Ovary (tissue), 10 donors: ENCODE measurements at regions of chr10 and their contacts with region 1.

Region 1: DNA sequence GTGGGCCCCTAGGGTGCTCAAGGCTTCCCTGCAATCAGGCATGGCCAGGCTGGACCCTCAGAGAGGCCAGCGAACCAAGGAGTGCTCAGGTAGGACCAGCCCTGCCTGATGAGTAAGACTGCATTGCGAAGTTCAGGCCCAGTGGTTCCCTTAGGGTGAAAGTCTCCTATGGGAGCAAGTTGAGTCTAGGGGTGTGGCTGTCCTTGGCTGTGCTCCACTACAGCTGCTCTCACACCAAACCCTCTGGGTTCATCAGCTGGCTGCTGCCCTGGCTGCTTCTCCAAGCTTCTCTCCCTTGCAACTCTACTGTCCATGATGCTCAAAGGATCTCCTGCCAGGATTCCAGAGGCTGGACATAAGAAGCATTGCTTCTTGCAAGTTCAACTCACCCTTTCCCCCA is 18.7 kb downstream of the FAM25A start:
- DNase-seq: no peak
- H3K4me3 ChIP-seq: no peak overlapping the region
- H3K27ac ChIP-seq: no peak overlapping the region
- H3K4me1 ChIP-seq: no peaks in the 10 kb centered on the region
- H3K27me3 ChIP-seq: no peaks in the 10 kb centered on the region
- CTCF ChIP-seq: no peak
- EP300 ChIP-seq: no peak
- POLR2A ChIP-seq: no peak

Region 2: GRCh38 chr10:85645926-85646711 is 1392.7 kb before region 1 on chr10:
- intact Hi-C with region 1: loop called in 1 of 4 experiments (anchors 5 kb)
- DNase-seq: no peak
- H3K4me3 ChIP-seq: no peak overlapping the region
- H3K27ac ChIP-seq: no peak overlapping the region
- H3K4me1 ChIP-seq: no peaks in the 10 kb centered on the region
- H3K27me3 ChIP-seq: no peaks in the 10 kb centered on the region
- CTCF ChIP-seq: no peak
- EP300 ChIP-seq: no peak
- POLR2A ChIP-seq: no peak